Gastrocnemius medialis (tissue), 4 donors: ENCODE measurements at regions of chr10 and their contacts with region 1.

Region 1: DNA sequence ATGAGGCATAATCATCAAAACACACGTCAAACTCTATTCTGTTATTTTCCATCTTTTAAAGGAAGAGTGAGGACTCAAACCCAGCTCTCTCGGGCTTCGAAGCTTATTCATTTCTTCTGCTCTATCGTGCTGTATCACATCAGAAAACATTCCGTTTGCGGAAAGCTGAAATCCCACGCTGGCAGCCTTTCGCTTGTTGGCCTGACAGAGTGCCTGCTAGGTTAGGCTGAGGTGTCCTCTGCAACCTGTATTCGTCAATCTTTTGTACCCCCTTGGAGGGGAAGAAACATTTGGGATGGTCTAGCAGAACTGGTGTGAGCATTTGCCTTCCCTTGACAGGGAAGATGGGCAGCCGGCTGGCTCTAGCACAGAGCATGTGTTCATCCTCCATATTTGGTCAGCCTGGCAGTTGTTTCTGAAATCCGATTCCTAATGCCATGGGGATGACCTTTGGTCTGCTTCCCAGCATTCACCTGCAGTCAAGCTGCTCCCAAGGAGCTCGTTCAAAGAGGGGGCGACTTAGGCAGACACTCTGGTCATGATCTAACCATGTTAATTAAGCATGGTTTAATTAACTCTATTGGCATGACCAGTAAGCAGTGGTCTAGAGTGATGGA is 55.2 kb downstream of the TACC2 start:
- DNase-seq: peak; percentile 83 to 89
- ATAC-seq: peak; percentile 89 to 94
- H3K4me3 ChIP-seq: peak overlapping the region; percentile 4 to 44 (median 24)
- H3K27ac ChIP-seq: peak overlapping the region; percentile 78 to 92 (median 87)
- H3K4me1 ChIP-seq: peaks cover 54 to 58% of the 10 kb centered on the region in 2 donors
- H3K27me3 ChIP-seq: no peaks in the 10 kb centered on the region
- CTCF ChIP-seq: no peak
- POLR2A ChIP-seq: peak in 1 of 2 donors; percentile 55

Region 2: DNA sequence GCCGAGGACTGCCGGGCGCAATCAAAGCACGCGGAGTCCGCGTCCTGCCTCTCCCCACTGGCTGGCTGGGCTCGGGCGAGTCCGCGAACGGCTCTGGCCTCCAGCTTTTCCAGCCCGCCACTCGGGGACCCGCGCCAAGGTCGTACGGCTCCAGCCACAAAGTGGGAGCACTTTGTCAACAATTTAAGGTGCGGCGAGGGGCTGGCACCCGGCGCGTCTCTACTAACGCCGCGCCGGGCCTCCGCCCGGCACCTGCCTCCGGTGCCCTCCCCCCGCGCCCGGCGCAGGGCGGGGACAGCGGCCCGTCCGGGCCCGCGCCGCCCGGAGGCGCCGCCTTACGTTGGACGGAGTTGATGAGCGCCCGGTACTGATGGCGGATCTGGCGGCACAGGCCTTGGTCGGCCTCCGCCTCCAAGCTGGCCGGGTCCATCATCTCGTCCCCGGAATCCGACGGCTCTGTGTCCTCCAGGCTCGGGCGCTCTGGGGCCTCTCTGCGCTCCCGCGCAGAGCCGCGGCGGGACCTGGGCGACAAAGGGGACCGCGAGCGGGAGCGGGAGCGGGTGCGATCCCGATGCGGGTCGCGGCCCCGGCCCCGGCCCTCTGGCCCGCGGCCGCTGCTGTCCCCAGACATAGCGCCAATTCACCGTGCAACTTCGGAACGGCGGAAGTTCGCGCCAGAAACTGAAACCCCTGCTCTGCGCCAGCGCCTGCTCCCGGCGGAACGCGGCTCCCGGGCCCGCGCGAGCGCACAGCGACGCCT is 69.4 kb before region 1 on chr10 and contains the start of gene NSMCE4A:
- in situ Hi-C with region 1: no loop called
- intact Hi-C with region 1: loop called (anchors 5 kb)
- DNase-seq: peak; percentile 68 to 77
- ATAC-seq: peak; percentile 88 to 89
- H3K4me3 ChIP-seq: peak within 1 kb of the TSS; percentile 71 to 91 (median 81)
- H3K27ac ChIP-seq: peak within 1 kb of the TSS; percentile 94 to 99 (median 96)
- H3K4me1 ChIP-seq: peaks cover 16 to 19% of the 10 kb centered on the region in 2 donors
- H3K27me3 ChIP-seq: no peaks in the 10 kb centered on the region
- CTCF ChIP-seq: peak in 4 of 5 experiments; percentile 66 to 80 (median 68)
- POLR2A ChIP-seq: peak; percentile 87 to 92
- total RNA-seq, gene NSMCE4A: 20.1 to 37.7 (median 26.9) TPM

Region 3: DNA sequence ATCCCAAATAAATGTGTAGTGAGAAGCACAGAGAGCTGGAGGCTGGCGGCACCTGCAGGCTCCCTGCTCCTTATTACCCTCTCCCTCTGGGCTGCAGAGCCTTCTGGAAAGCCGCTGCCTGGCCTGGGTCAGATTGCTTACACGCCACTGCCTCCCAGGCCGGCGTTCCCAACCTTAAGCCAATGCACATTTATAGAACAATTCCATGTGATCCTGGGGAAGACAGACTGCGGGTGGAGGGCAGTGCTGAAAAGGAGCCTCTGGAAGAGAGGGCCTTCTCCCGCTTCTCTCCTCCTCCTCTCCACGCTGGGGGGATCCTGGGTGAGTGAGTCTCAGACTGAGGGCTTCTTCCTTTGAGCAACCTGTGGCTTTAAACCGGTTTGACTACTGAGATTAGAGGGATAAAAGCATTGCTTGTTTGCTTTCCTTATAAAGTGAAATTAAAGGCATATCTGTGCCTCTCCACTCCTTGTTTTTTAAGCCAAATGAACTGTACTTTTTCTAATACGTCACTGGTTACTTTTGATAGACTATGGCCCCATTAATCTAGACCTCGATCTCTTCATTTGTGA is 49.7 kb before region 1 on chr10:
- in situ Hi-C with region 1: loop called in 1 of 4 experiments (anchors 10 kb)
- intact Hi-C with region 1: loop called (anchors 2 kb)
- DNase-seq: peak; percentile 89 to 96
- ATAC-seq: peak; percentile 40 to 58
- H3K4me3 ChIP-seq: peak overlapping the region; percentile 37 to 63 (median 57)
- H3K27ac ChIP-seq: peak overlapping the region; percentile 94 to 98 (median 96)
- H3K4me1 ChIP-seq: peaks cover 34 to 51% of the 10 kb centered on the region in 2 donors
- H3K27me3 ChIP-seq: no peaks in the 10 kb centered on the region
- CTCF ChIP-seq: peak in 1 of 5 experiments; percentile 15
- POLR2A ChIP-seq: peak; percentile 94 to 98

Region 4: DNA sequence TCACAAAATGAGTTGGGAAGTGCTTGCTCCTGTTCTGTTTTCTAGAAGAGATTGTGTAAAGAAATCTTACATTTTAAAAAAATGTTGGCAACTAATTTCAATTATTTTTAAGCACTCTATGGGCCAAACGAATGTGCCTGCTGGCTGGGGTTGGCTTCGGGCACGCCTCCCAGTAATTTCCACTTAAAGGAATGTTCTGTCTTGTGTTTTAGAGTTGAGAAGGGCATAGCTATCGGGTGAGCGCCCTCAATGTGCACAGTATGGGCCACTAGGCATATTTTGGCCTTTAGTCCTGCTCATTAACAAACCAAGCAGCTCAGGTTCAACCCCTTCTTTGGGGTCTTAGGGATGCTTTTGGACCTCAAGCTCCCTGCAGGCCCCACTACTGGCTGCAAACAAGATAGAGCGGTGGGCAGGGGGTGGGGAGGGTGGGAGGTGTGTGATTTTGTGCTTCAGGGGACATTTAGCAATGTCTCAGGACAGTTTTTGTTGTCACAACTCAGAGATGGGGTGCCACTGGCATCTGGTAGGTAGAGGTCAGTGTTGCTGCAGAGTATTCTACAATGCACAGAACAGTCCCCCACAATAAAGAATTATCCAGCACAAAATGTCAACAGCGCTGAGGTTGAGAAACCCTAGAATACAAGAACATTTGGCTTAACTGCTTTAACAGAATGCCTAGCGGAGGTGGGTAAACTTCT is 14.5 kb before region 1 on chr10:
- in situ Hi-C with region 1: no loop called
- intact Hi-C with region 1: no loop called
- DNase-seq: peak; percentile 48 to 68
- ATAC-seq: peak; percentile 57 to 66
- H3K4me3 ChIP-seq: peak overlapping the region in 2 of 4 donors; percentile 14 to 30
- H3K27ac ChIP-seq: peak overlapping the region; percentile 75 to 90 (median 81)
- H3K4me1 ChIP-seq: peaks cover 42 to 47% of the 10 kb centered on the region in 2 donors
- H3K27me3 ChIP-seq: no peaks in the 10 kb centered on the region
- CTCF ChIP-seq: peak in 2 of 5 experiments; percentile 28 to 32
- POLR2A ChIP-seq: no peak

Region 5: GRCh38 chr10:122407375-122408125 is 363.4 kb after region 1 on chr10:
- in situ Hi-C with region 1: no loop called
- intact Hi-C with region 1: no loop called
- DNase-seq: peak in 1 of 2 donors; percentile 23
- ATAC-seq: no peak
- H3K4me3 ChIP-seq: no peak overlapping the region
- H3K27ac ChIP-seq: no peak overlapping the region
- H3K4me1 ChIP-seq: no peaks in the 10 kb centered on the region
- H3K27me3 ChIP-seq: no peaks in the 10 kb centered on the region
- CTCF ChIP-seq: no peak
- POLR2A ChIP-seq: no peak